Activated CD4-positive, alpha-beta T cell treated with anti-CD3 and anti-CD28 coated beads, Interleukin-2, amount 10 ng/mL, durations not matched to agents 7 days and 5 days (primary cell): ENCODE measurements at regions of chr3 and their contacts with region 1.

Region 1: DNA sequence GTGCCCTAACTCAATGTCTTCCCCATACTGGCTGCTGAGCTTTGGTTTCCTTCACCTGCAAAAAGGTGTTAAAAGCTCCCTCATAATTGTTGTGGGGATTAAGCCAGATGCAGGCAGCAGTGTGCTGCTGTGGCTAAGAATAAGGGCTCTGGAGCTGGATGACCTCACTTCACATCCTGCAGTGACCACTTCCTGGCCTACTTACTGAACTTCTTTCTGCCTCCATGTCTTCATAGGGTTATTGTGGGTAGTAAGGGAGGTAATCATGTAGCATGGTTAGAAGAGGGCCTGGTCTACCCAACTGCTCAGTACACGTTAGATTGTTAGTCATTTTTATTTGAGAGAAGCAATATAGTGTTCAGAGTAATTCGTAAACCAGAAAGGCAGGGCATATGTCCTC is 18.4 kb downstream of the GYG1 start:
- DNase-seq: peak; percentile 57
- H3K4me3 Mint-ChIP-seq: no peak overlapping the region
- H3K27ac Mint-ChIP-seq: peak overlapping the region; percentile 85
- H3K4me1 Mint-ChIP-seq: peaks cover 30% of the 10 kb centered on the region
- H3K27me3 Mint-ChIP-seq: no peaks in the 10 kb centered on the region

Region 2: GRCh38 chr3:148943506-148944205 is 66.1 kb before region 1 on chr3:
- CTCF ChIA-PET with region 1: no interaction called
- POLR2A ChIA-PET with region 1: no interaction called
- DNase-seq: peak; percentile 34
- H3K4me3 Mint-ChIP-seq: no peak overlapping the region
- H3K27ac Mint-ChIP-seq: no peak overlapping the region
- H3K4me1 Mint-ChIP-seq: no peaks in the 10 kb centered on the region
- H3K27me3 Mint-ChIP-seq: peaks cover 3% of the 10 kb centered on the region

Region 3: GRCh38 chr3:148998715-148999423 is 10.9 kb before region 1 on chr3:
- CTCF ChIA-PET with region 1: interaction called, 10 read pairs
- POLR2A ChIA-PET with region 1: no interaction called
- DNase-seq: peak; percentile 35
- H3K4me3 Mint-ChIP-seq: peak overlapping the region; percentile 35
- H3K27ac Mint-ChIP-seq: peak overlapping the region; percentile 81
- H3K4me1 Mint-ChIP-seq: peaks cover 37% of the 10 kb centered on the region
- H3K27me3 Mint-ChIP-seq: no peaks in the 10 kb centered on the region